Activated CD8-positive, alpha-beta memory T cell treated with anti-CD3 and anti-CD28 coated beads, Interleukin-2, amount 10 ng/mL, durations not matched to agents 7 days and 5 days (primary cell): ENCODE measurements at regions of chr10 and their contacts with region 1.

Region 1: DNA sequence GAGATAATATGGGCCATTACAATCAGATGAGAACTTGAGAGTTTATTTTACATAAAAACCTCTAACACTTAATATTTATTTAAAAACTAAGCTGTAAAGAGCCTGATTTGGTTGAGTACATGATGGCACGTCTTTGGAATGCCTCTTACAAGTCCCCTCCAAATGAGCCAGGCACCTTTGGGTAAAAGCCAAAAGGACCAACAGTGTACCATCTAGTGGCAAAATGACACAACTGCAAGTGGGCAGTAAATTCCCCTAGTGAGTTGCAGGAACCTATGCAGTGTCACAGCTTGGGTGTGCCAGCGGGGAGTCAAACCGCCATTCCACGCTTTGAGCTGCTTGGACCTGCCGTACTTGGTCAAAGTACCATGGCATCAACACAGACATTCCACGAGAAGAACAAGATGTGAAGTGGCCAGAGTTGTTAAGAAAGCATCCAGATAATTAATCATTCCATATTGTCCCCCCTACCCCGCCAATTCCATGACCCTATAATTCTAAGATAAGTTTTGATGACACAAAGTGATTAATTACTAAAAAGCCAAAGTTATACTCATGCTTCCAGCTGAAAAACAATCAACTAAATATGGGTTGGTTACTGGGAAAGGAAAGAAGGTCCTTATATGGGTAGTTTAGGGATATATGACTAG is 115.2 kb downstream of the SORBS1 start:
- DNase-seq: peak; percentile 61
- ATAC-seq: peak; percentile 53
- H3K4me3 Mint-ChIP-seq: no peak overlapping the region
- H3K27ac Mint-ChIP-seq: no peak overlapping the region
- H3K4me1 Mint-ChIP-seq: peaks cover 11% of the 10 kb centered on the region
- H3K27me3 Mint-ChIP-seq: peaks cover 37% of the 10 kb centered on the region

Region 2: GRCh38 chr10:95456516-95456915 is 10.6 kb after region 1 on chr10:
- CTCF ChIA-PET with region 1: interaction called, 13 read pairs
- DNase-seq: no peak
- ATAC-seq: no peak
- H3K4me3 Mint-ChIP-seq: no peak overlapping the region
- H3K27ac Mint-ChIP-seq: no peak overlapping the region
- H3K4me1 Mint-ChIP-seq: no peaks in the 10 kb centered on the region
- H3K27me3 Mint-ChIP-seq: peaks cover 22% of the 10 kb centered on the region